Activated naive CD4-positive, alpha-beta T cell treated with anti-CD3 and anti-CD28 coated beads for 36 hours (primary cell): ENCODE measurements at regions of chr1 and their contacts with region 1.

Region 1: GRCh38 chr1:155323798-155324610 is 3.3 kb downstream of the RUSC1 start:
- DNase-seq: peak; percentile 96
- H3K4me3 Mint-ChIP-seq: peak overlapping the region; percentile 86
- H3K27ac Mint-ChIP-seq: peak overlapping the region; percentile 61
- H3K4me1 Mint-ChIP-seq: peaks cover 42% of the 10 kb centered on the region
- H3K27me3 Mint-ChIP-seq: peaks cover 2% of the 10 kb centered on the region

Region 2: DNA sequence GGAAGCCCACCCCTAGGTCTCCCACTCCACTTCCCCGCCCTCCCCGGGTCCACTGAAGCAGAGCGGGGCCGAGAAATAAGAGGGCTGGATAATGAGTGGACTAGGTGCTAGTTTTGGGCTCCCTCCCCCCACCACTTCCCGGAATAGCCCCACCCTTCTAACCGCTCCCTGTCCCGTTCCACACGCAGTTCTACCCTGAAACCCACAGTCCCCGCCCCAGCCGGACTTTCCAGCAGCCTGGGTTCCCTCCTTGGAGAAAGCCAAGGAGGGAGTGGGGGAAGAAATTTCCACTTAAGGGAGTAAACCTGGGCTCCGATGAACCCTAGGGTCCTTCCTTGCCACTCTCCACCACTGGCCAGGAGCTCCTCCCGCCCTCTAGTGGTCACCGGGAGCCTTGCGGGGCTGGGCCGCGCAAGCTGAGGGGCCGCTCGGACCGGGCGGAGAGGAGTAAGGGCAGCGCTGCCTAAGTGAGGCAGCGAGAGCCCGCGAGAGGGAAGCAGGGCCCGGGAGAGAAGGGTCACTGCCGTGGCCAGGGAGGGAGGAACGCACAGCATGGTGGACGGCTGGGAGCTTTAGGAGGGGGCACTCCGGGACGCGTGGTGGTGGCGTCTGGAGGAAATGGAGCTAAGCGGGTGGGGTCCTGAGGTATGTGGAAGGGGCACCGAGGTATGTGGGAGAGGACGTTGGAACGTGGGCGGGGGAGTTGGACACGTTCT is 130.6 kb before region 1 on chr1:
- CTCF ChIA-PET with region 1: interaction called, 3 read pairs
- intact Hi-C with region 1: loop called (anchors 5 kb)
- DNase-seq: peak; percentile 86
- H3K4me3 Mint-ChIP-seq: peak overlapping the region; percentile 93
- H3K27ac Mint-ChIP-seq: peak overlapping the region; percentile 96
- H3K4me1 Mint-ChIP-seq: peaks cover 27% of the 10 kb centered on the region
- H3K27me3 Mint-ChIP-seq: no peaks in the 10 kb centered on the region

Region 3: GRCh38 chr1:155208541-155209311 is 115.3 kb before region 1 on chr1 and contains the start of gene MTX1:
- CTCF ChIA-PET with region 1: interaction called, 5 read pairs
- intact Hi-C with region 1: loop called (anchors 1 kb)
- DNase-seq: peak; percentile 89
- H3K4me3 Mint-ChIP-seq: peak within 1 kb of the TSS; percentile 88
- H3K27ac Mint-ChIP-seq: peak within 1 kb of the TSS; percentile 71
- H3K4me1 Mint-ChIP-seq: peaks cover 29% of the 10 kb centered on the region
- H3K27me3 Mint-ChIP-seq: no peaks in the 10 kb centered on the region
- total RNA-seq, gene MTX1: 46.8 to 47.4 TPM

Region 4: DNA sequence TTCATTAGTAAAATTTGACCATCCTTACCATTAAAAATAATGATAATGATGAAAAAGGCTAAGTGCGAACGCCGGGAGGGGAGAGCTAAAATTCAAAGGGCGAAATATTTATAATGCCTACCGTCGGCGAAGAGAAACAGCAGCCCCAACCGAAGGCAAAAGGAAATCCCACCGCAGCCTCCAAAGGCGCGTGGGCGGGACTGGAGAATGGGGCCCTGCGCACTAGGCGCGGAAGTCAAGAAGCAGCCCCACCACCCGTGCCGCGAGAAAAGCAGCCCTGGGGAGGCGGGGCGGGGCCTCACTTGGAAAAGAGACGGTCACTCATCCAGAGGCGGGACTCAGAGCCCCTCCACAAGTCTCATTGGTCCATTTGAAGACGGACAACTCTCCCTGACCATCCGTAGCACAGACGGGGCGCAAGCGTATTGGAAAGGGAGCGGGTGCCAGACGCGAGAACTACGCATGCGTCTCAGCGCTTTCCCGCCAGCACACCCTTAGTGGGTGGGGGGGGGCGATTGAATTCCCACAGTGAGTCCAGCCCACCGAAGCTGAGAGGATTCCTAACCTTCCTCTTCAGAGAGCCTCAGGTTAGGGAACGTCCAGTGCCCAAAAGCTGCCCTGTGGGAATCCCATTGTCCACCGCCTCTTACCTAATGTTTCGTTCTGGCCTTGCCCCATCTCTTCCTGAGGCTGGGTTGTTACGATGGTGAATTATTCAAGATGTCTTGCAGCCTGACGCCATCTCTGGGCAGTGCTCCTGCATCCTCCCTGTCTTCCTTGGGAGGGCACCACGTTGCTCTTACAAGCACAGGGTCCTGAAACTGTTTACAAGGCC is 96.5 kb before region 1 on chr1:
- CTCF ChIA-PET with region 1: no interaction called
- intact Hi-C with region 1: loop called (anchors 1 kb)
- DNase-seq: peak; percentile 100
- H3K4me3 Mint-ChIP-seq: peak overlapping the region; percentile 89
- H3K27ac Mint-ChIP-seq: peak overlapping the region; percentile 96
- H3K4me1 Mint-ChIP-seq: peaks cover 31% of the 10 kb centered on the region
- H3K27me3 Mint-ChIP-seq: no peaks in the 10 kb centered on the region

Region 5: DNA sequence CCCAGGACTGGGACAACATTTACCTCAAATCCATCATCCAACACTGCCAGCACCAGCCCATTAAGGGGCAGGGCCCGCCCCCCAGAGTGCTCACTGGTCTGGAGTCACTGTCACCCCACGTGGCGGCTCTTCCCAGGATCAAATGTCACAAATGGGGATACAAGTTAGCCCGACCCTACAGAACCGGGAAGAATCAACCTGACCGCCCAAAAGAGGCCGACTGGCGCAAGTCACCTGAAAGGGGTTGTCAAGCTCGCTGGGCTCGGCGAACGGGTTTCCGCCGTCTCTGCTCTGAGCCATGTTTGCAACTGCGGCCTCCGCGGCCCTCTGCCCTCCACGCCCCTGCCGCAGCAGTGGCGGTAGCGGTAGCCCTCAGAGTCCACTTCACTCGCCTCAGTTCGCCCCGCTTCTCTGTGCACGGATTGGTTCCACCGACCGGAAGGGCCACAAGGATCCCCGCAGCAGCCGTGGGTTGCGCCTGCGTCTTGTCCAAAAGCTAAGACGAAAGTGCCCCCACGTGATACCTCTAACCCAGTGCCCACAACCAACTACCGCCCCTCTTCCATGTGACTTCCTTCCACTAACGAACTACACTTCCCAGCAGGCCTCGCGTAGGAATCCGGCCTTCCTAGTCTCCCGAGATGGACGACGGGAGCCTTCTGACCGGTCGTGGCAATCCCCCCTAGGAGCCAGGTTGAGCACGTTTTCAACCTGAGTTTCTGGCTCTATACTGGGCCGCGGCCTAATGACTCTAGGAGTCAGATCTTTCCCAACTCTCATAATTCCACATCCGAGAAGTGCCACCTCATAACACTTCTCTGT is 61.9 kb before region 1 on chr1 and contains the start of gene SCAMP3:
- CTCF ChIA-PET with region 1: interaction called, 3 read pairs
- intact Hi-C with region 1: loop called (anchors 1 kb)
- DNase-seq: peak; percentile 95
- H3K4me3 Mint-ChIP-seq: peak within 1 kb of the TSS; percentile 95
- H3K27ac Mint-ChIP-seq: peak within 1 kb of the TSS; percentile 93
- H3K4me1 Mint-ChIP-seq: peaks cover 27% of the 10 kb centered on the region
- H3K27me3 Mint-ChIP-seq: no peaks in the 10 kb centered on the region
- total RNA-seq, gene SCAMP3: 80.3 to 82.9 TPM

Region 6: GRCh38 chr1:155277070-155277895 is 46.7 kb before region 1 on chr1 and contains the start of gene HCN3:
- CTCF ChIA-PET with region 1: interaction called, 6 read pairs
- intact Hi-C with region 1: loop called (anchors 1 kb)
- DNase-seq: peak; percentile 96
- H3K4me3 Mint-ChIP-seq: peak within 1 kb of the TSS; percentile 62
- H3K27ac Mint-ChIP-seq: no peak within 1 kb of the TSS
- H3K4me1 Mint-ChIP-seq: peaks cover 30% of the 10 kb centered on the region
- H3K27me3 Mint-ChIP-seq: no peaks in the 10 kb centered on the region
- total RNA-seq, gene HCN3: 0.79 to 1.6 TPM

Region 7: GRCh38 chr1:155591770-155592169 is 267.8 kb after region 1 on chr1:
- CTCF ChIA-PET with region 1: interaction called, 5 read pairs
- intact Hi-C with region 1: loop called (anchors 1 kb)
- DNase-seq: peak; percentile 44
- H3K4me3 Mint-ChIP-seq: no peak overlapping the region
- H3K27ac Mint-ChIP-seq: no peak overlapping the region
- H3K4me1 Mint-ChIP-seq: no peaks in the 10 kb centered on the region
- H3K27me3 Mint-ChIP-seq: no peaks in the 10 kb centered on the region